ENCODE measurements at regions of chr3 and their contacts with region 1.

Region 1: DNA sequence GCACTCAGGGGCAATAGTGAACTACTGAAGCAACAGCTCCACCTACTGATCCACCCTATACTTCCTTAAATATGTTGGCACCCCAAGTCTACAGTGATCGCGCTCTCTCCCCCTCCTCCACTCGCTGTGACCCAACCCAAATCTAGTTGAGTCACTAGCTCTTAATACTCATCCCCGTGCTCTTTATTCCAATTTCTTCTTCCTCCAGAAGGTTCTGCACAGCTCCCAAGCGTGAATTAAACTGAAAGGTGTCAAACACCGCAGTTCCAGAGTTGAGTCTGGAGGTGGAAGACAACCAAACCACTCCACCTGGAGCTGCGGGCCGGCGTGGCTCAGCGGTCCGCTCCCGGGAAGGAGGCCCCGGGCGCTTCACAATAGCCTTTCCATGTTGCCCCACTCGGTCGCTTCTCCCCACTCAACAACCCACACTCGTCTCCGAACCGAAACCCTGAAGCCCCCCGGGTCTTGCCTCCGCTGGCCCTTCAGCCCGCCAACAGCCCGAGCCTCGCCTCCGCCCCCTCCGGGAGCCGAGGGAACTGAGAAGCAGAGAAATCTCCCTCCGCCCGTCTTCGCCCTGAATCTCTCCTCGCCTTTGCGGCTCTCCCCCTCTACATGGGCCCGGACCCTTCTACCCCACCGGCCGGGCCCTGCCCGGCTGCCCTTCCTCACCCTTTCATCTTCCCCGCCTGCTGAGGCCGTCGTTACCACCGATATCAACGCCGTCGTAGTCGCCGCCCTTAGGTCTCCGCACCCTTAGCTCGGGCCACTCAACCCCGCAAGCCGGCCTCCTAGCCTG is 578 bp downstream of the NAA50 start:
- DNase-seq: peak; percentile 81 to 86
- ATAC-seq: peak; percentile 69 to 81
- H3K4me3 ChIP-seq: peak overlapping the region; percentile 87 to 97 (median 92)
- H3K27ac ChIP-seq: peak overlapping the region; percentile 97 to 100 (median 98)
- H3K4me1 ChIP-seq: peaks cover 62 to 67% of the 10 kb centered on the region in 2 donors
- H3K27me3 ChIP-seq: no peaks in the 10 kb centered on the region
- CTCF ChIP-seq: peak; percentile 49 to 64 (median 57)
- POLR2A ChIP-seq: peak in 1 of 2 donors; percentile 39

Region 2: GRCh38 chr3:112561731-112562688 is 1183.5 kb before region 1 on chr3 and contains the starts of genes ATG3 and SLC35A5:
- in situ Hi-C with region 1: no loop called
- intact Hi-C with region 1: loop called (anchors 5 kb)
- DNase-seq: peak; percentile 96 to 98
- ATAC-seq: peak; percentile 95
- H3K4me3 ChIP-seq: peak within 1 kb of the TSS; percentile 71 to 93 (median 88)
- H3K27ac ChIP-seq: peak within 1 kb of the TSS; percentile 92 to 97 (median 94)
- H3K4me1 ChIP-seq: peaks cover 25 to 36% of the 10 kb centered on the region in 2 donors
- H3K27me3 ChIP-seq: no peaks in the 10 kb centered on the region
- CTCF ChIP-seq: peak in 3 of 5 experiments; percentile 18 to 38 (median 35)
- POLR2A ChIP-seq: peak; percentile 69 to 79
- total RNA-seq, gene ATG3: 34.2 to 61.9 (median 50.7) TPM
- total RNA-seq, gene SLC35A5: 5.0 to 15.3 (median 9.5) TPM

Region 3: GRCh38 chr3:113148286-113148685 is 597.2 kb before region 1 on chr3:
- in situ Hi-C with region 1: no loop called
- intact Hi-C with region 1: no loop called
- DNase-seq: no peak
- ATAC-seq: no peak
- H3K4me3 ChIP-seq: no peak overlapping the region
- H3K27ac ChIP-seq: peak overlapping the region in 2 of 4 donors; percentile 22 to 27
- H3K4me1 ChIP-seq: peaks cover 0 to 21% of the 10 kb centered on the region in 2 donors
- H3K27me3 ChIP-seq: no peaks in the 10 kb centered on the region
- CTCF ChIP-seq: no peak
- POLR2A ChIP-seq: no peak

Region 4: DNA sequence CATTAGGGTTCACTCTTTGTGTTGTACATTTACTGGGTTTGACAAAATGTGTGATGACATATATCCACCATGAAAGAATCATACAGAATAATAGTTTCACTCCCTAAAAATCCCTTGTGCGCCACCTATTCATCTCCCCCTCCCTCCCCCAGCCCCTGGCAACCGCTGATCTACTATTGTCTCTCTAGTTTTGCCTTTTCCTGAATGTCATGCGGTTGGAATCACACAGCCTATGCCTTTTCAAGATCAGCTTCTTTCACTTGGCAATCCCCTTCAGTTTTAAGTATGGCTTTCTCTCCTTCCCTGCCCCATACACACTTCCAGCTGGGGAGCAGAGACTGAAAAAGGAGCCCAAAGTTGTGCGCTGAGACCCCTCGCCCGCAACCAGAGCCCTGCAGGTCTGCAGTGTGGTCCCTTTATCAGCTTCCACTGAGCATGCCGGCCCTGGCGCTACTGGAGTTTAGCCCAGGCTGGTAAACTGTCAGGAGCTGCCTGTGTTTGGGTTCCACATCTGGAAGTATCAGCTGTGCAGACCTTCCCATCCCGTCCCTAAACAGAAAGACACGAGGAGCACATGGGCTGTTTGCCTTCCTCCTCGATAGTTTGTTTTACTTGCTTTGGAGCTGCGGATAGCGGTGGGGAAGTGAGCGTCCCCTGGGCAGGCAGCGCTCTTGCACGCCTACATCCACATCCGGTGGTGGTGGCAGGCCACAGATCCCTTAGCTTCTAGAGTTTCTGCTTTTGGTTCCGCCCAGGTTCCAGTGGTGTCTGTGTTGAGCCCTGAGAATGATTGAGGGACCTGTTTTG is 521.8 kb before region 1 on chr3:
- in situ Hi-C with region 1: no loop called
- intact Hi-C with region 1: no loop called
- DNase-seq: no peak
- ATAC-seq: no peak
- H3K4me3 ChIP-seq: no peak overlapping the region
- H3K27ac ChIP-seq: no peak overlapping the region
- H3K4me1 ChIP-seq: no peaks in the 10 kb centered on the region
- H3K27me3 ChIP-seq: no peaks in the 10 kb centered on the region
- CTCF ChIP-seq: no peak
- POLR2A ChIP-seq: no peak

Region 5: GRCh38 chr3:113514265-113514769 is 231.2 kb before region 1 on chr3:
- in situ Hi-C with region 1: loop called in 3 of 4 experiments (anchors 10 to 25 kb)
- intact Hi-C with region 1: loop called (anchors 2 kb)
- DNase-seq: no peak
- ATAC-seq: peak; percentile 20 to 37
- H3K4me3 ChIP-seq: peak overlapping the region; percentile 83 to 94 (median 90)
- H3K27ac ChIP-seq: peak overlapping the region; percentile 81 to 89 (median 86)
- H3K4me1 ChIP-seq: peaks cover 8 to 9% of the 10 kb centered on the region in 2 donors
- H3K27me3 ChIP-seq: peaks cover 0 to 3% (median 0%) of the 10 kb centered on the region in 3 donors
- CTCF ChIP-seq: no peak
- POLR2A ChIP-seq: no peak

Region 6: DNA sequence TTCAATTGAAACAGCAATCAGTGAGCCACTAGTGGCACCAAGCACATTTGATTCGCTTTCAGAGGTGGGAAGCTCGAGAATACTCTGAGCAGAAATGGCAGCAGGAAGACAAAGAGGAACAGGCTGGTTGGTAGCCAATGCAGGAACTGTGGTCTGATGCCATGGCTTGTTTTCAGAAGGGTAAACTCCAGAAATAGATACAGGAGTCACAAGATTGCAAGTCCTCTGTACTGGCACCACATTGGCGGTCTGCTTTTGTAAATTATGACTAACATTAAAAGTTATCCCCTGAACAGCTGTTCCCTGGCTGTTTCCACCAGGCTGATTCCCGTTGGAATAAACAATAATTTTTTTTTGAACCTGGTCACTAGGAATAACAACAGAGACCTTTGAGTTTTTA is 84.6 kb before region 1 on chr3:
- in situ Hi-C with region 1: no loop called
- intact Hi-C with region 1: loop called (anchors 2 kb)
- DNase-seq: peak; percentile 76 to 88
- ATAC-seq: peak; percentile 97 to 98
- H3K4me3 ChIP-seq: peak overlapping the region in 3 of 4 donors; percentile 18 to 29 (median 19)
- H3K27ac ChIP-seq: peak overlapping the region; percentile 86 to 89 (median 88)
- H3K4me1 ChIP-seq: peaks cover 44 to 71% of the 10 kb centered on the region in 2 donors
- H3K27me3 ChIP-seq: no peaks in the 10 kb centered on the region
- CTCF ChIP-seq: no peak
- POLR2A ChIP-seq: peak in 1 of 2 donors; percentile 15

Region 7: GRCh38 chr3:113712129-113712528 is 33.3 kb before region 1 on chr3:
- in situ Hi-C with region 1: no loop called
- intact Hi-C with region 1: no loop called
- DNase-seq: no peak
- ATAC-seq: no peak
- H3K4me3 ChIP-seq: no peak overlapping the region
- H3K27ac ChIP-seq: no peak overlapping the region
- H3K4me1 ChIP-seq: peaks cover 4 to 13% of the 10 kb centered on the region in 2 donors
- H3K27me3 ChIP-seq: no peaks in the 10 kb centered on the region
- CTCF ChIP-seq: no peak
- POLR2A ChIP-seq: no peak

Region 8: GRCh38 chr3:113838631-113839209 is 93.2 kb after region 1 on chr3 and contains the start of gene GRAMD1C:
- in situ Hi-C with region 1: no loop called
- intact Hi-C with region 1: loop called (anchors 1 kb)
- DNase-seq: peak; percentile 63 to 68
- ATAC-seq: peak; percentile 82 to 90
- H3K4me3 ChIP-seq: peak within 1 kb of the TSS; percentile 28 to 65 (median 50)
- H3K27ac ChIP-seq: peak within 1 kb of the TSS in 3 of 4 donors; percentile 2 to 45 (median 18)
- H3K4me1 ChIP-seq: peaks cover 0 to 6% of the 10 kb centered on the region in 2 donors
- H3K27me3 ChIP-seq: no peaks in the 10 kb centered on the region
- CTCF ChIP-seq: peak; percentile 73 to 86 (median 82)
- POLR2A ChIP-seq: no peak
- total RNA-seq, gene GRAMD1C: 0.29 to 0.95 TPM in 2 of 4 donors, not detected in the others

Region 9: DNA sequence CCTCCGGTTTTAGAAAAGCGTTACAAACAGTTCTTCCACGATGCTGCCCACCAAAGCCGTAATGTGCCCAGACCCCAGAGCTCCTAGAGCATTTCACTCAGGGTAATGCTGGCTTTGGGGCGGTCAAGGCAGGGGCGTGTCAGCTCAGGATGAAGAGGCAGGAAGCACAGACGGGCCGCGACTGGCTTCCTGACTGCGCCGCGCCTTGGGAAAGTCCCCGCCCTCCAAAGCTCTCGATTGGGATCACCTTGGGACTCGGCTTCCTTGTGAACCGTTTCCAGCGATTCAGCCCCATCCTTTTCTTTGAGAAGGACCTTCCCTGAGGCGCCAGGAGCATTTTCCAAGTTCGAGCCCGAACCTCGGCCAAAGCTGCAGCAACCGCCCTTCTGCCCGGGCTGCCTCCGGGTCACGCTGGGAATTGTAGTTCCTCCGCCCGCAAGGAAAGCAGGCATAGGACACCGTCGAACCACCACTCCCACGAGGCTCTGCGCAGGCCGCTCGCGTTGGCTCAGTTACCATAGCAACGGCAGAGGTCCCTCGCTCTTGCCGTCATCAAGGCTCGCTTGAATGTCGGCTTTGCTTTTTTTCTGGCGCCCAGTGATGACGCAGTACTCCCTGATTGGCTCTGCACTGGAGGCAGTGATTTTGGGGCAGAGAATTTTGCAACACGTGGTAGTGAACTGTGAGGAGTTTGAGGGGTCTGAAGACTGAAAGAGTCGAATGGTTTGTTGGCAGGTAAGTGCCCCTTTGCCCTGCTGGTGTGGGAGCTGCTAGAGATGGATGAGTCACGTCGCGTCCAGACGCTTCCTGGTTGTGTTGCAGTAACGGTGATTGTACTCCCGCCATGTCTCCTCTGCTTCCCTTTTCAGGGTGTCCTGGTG is 310.9 kb after region 1 on chr3 and contains the starts of genes CCDC191 and QTRT2:
- in situ Hi-C with region 1: loop called in 2 of 4 experiments (anchors 25 kb)
- intact Hi-C with region 1: loop called (anchors 5 kb)
- DNase-seq: peak; percentile 99
- ATAC-seq: peak; percentile 97 to 98
- H3K4me3 ChIP-seq: peak within 1 kb of the TSS; percentile 76 to 87 (median 82)
- H3K27ac ChIP-seq: peak within 1 kb of the TSS; percentile 79 to 83 (median 82)
- H3K4me1 ChIP-seq: peaks cover 10 to 19% of the 10 kb centered on the region in 2 donors
- H3K27me3 ChIP-seq: no peaks in the 10 kb centered on the region
- CTCF ChIP-seq: no peak
- POLR2A ChIP-seq: no peak
- total RNA-seq, gene CCDC191: 0.29 to 0.82 (median 0.42) TPM
- total RNA-seq, gene QTRT2: 3.3 to 7.1 (median 6.9) TPM